ENCODE measurements at regions of chr11 and their contacts with region 1.

Region 1: GRCh38 chr11:118240999-118241768 is 11.0 kb downstream of the MPZL3 start:
- DNase-seq: no peak
- ATAC-seq: peak; percentile 90
- H3K4me3 ChIP-seq: no peak overlapping the region
- H3K27ac ChIP-seq: no peak overlapping the region
- H3K4me1 ChIP-seq: peaks cover 19% of the 10 kb centered on the region
- H3K27me3 ChIP-seq: no peaks in the 10 kb centered on the region
- CTCF ChIP-seq: no peak
- EP300 ChIP-seq: peak; percentile 51 to 82; a peak in 3 of 4 replicates
- POLR2A ChIP-seq: no peak
- RAD21 ChIP-seq: no peak

Region 2: GRCh38 chr11:117759305-117759704 is 481.9 kb before region 1 on chr11:
- CTCF ChIA-PET with region 1: no interaction called
- POLR2A ChIA-PET with region 1: no interaction called
- RAD21 ChIA-PET with region 1: no interaction called
- SMC1A ChIA-PET with region 1: no interaction called
- in situ Hi-C with region 1: no loop called
- intact Hi-C with region 1: no loop called
- DNase-seq: no peak
- ATAC-seq: no peak
- H3K4me3 ChIP-seq: no peak overlapping the region
- H3K27ac ChIP-seq: no peak overlapping the region
- H3K4me1 ChIP-seq: no peaks in the 10 kb centered on the region
- H3K27me3 ChIP-seq: peaks cover 2 to 4% of the 10 kb centered on the region in 2 experiments; a peak in 2 of 4 replicates
- CTCF ChIP-seq: no peak
- EP300 ChIP-seq: no peak
- POLR2A ChIP-seq: no peak
- RAD21 ChIP-seq: no peak

Region 3: DNA sequence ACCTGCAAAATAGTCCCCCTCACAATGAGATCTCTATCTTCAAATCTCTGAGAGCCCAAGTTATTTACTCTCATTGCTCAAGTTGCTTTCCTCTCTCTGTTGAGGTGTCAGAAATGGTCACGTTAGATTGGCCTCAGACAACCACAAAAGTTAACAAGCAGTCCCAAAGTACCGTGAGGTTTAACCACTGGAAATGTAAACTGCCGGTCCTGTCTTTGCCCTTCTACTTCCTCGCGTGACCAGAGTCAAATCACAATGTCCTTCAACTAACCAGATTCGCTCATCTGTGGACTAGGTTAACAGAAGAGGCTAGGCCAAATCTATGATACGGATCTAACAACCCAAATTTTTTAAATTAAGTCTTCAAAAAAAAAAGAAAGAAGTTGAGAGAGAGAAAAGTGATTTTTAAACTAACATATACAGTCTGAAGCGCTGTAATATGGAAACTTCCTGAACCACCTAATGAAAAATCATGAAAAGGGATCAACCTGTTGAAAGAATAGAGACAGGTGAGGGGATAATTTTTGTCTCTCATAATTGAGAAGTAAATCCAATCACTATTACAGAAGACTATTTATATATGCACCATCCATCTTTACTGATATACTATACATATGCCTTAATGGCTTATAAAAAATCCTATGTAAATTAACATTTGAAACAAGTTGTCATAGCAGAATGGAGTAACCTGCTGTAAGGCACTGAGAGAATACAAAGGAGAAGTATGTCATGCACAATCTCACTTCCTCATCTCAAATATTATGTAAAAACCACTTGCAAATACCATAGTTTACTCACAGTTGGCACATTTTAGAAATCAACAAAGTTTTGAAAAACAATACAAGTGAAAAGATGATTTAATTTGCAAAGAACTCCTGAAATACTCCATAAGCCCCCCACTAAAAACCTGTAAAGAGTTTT is 13.1 kb before region 1 on chr11:
- CTCF ChIA-PET with region 1: interaction called, 15 read pairs
- POLR2A ChIA-PET with region 1: interaction called, 6 read pairs
- RAD21 ChIA-PET with region 1: interaction called, 5 read pairs
- SMC1A ChIA-PET with region 1: interaction called, 10 read pairs
- in situ Hi-C with region 1: no loop called
- intact Hi-C with region 1: loop called (anchors 2 kb)
- DNase-seq: no peak
- ATAC-seq: peak; percentile 85
- H3K4me3 ChIP-seq: no peak overlapping the region
- H3K27ac ChIP-seq: peak overlapping the region; percentile 45; the same call in 1 of the 2 replicates
- H3K4me1 ChIP-seq: peaks cover 30% of the 10 kb centered on the region
- H3K27me3 ChIP-seq: no peaks in the 10 kb centered on the region
- CTCF ChIP-seq: no peak
- EP300 ChIP-seq: peak; percentile 90 to 94
- POLR2A ChIP-seq: no peak
- RAD21 ChIP-seq: no peak

Region 4: DNA sequence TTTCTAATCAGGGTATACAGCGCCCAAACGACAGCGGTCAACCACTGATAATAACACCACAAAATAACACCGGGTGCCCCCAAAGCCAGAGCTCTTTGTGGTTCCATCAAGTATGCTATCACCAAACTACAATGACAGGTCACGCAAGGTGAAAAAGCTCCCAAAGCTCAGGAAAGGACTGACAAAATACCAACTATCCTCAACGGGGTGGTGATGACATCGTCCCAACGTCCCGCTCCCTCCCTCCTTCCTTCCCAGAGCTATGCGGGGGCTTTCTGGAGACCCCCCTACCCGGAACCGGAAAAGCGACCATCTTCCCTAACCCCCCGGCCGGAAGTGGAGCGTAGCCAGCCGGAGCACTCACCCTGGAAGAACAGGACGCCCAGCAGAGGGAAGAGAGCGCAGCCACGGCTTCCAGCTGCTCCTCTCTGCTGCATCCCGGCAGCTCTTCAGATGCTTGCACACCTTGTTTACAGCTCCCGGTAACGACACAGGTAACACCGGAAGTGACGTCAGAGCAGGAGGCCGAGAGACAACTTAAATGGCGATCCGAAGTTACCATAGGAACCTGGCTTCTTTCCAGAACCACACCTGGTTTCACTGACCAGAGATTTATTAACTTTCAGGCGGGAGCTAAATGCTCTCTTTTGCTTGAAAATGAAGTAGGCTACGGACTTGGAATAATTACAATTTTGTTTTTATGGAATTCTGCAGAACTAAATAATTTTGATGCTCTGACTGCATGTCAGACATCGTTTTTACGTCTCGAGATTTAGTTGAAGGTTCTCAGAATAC is 10.9 kb after region 1 on chr11 and contains the start of gene MPZL3:
- CTCF ChIA-PET with region 1: interaction called, 5 read pairs
- POLR2A ChIA-PET with region 1: interaction called, 12 read pairs
- RAD21 ChIA-PET with region 1: interaction called, 11 read pairs
- SMC1A ChIA-PET with region 1: interaction called, 13 read pairs
- in situ Hi-C with region 1: no loop called
- intact Hi-C with region 1: no loop called
- DNase-seq: peak; percentile 85
- ATAC-seq: peak; percentile 81
- H3K4me3 ChIP-seq: peak within 1 kb of the TSS; percentile 83
- H3K27ac ChIP-seq: peak within 1 kb of the TSS; percentile 87
- H3K4me1 ChIP-seq: no peaks in the 10 kb centered on the region
- H3K27me3 ChIP-seq: no peaks in the 10 kb centered on the region
- CTCF ChIP-seq: no peak
- EP300 ChIP-seq: peak in 1 of 2 experiments; percentile 17; a peak in 1 of 4 replicates
- POLR2A ChIP-seq: peak; percentile 80
- RAD21 ChIP-seq: no peak
- polyA plus RNA-seq, gene MPZL3: 2.1 to 7.5 TPM

Measured in GM12878 (cell line).